H1 (cell line): ENCODE measurements at regions of chr10 and their contacts with region 1.

Region 1: GRCh38 chr10:2850202-2850601 is 217.1 kb upstream of the PFKP start:
- DNase-seq: no peak
- H3K4me3 ChIP-seq: no peak overlapping the region
- H3K27ac ChIP-seq: no peak overlapping the region
- H3K4me1 ChIP-seq: no peaks in the 10 kb centered on the region
- H3K27me3 ChIP-seq: no peaks in the 10 kb centered on the region
- CTCF ChIP-seq: no peak
- EP300 ChIP-seq: no peak
- POLR2A ChIP-seq: no peak
- RAD21 ChIP-seq: no peak

Region 2: DNA sequence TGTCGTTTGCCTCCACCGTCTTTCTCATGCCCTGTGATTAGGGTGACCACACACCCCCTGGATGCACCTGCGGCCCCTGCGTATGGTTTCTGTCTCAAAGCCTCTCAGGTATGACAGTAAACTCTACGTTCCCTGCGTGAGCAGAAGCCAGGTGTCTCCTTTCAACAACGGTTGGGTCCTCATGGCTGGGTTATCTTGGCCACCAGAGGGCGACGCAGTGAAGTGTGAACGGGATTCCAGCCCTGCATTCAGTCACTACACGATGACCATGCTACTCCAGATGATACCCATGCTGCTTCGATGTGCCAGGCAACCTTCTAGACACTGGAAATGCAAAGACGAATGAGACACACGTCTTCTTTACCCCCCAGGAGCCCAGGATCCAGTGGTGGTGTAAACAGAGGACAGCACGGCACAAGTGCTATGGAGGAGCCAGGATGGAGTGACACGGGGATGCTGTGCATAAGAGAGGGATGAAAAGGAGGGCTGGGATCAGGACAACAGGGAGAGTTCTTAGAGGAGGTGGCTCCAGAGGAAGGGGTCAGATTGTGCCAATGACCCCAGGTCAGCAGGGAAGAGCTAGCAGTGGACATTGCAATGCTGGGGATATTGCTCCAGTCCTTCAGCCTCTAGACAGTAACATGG is 11.0 kb before region 1 on chr10:
- CTCF ChIA-PET with region 1: interaction called, 16 read pairs
- POLR2A ChIA-PET with region 1: no interaction called
- DNase-seq: peak; percentile 19 to 85
- H3K4me3 ChIP-seq: no peak overlapping the region
- H3K27ac ChIP-seq: no peak overlapping the region
- H3K4me1 ChIP-seq: peaks cover 0 to 3% (median 0%) of the 10 kb centered on the region in 4 experiments; a peak in 1 of 7 replicates
- H3K27me3 ChIP-seq: peaks cover 0 to 5% (median 2%) of the 10 kb centered on the region in 4 experiments; a peak in 2 of 7 replicates
- CTCF ChIP-seq: peak; percentile 81 to 96 (median 95)
- EP300 ChIP-seq: no peak
- POLR2A ChIP-seq: no peak
- RAD21 ChIP-seq: peak; percentile 79 to 87

Region 3: DNA sequence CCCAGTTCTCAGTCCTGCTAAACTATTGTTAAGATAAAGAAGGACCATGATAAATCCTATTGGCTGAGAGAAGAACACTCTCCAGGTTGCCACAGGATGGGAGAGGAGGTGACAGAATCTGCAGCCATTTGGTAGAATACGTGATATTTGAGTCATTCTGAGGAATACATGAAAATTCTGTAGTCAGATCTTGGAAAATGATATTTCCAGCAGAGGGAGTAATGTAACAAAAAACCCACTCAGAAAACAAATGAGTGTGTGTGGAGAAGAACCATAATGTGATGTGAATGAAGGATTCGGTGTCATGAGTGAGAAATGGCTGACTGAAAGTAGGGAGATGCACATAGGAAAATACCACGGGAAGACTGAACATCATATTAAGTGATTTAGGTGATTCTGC is 88.7 kb after region 1 on chr10:
- CTCF ChIA-PET with region 1: no interaction called
- POLR2A ChIA-PET with region 1: no interaction called
- DNase-seq: no peak
- H3K4me3 ChIP-seq: no peak overlapping the region
- H3K27ac ChIP-seq: no peak overlapping the region
- H3K4me1 ChIP-seq: peaks cover 0 to 3% (median 0%) of the 10 kb centered on the region in 4 experiments; a peak in 1 of 7 replicates
- H3K27me3 ChIP-seq: peaks cover 0 to 2% (median 0%) of the 10 kb centered on the region in 4 experiments; a peak in 1 of 7 replicates
- CTCF ChIP-seq: no peak
- EP300 ChIP-seq: no peak
- POLR2A ChIP-seq: no peak
- RAD21 ChIP-seq: no peak